ENCODE measurements at regions of chr2 and their contacts with region 1.

Region 1: DNA sequence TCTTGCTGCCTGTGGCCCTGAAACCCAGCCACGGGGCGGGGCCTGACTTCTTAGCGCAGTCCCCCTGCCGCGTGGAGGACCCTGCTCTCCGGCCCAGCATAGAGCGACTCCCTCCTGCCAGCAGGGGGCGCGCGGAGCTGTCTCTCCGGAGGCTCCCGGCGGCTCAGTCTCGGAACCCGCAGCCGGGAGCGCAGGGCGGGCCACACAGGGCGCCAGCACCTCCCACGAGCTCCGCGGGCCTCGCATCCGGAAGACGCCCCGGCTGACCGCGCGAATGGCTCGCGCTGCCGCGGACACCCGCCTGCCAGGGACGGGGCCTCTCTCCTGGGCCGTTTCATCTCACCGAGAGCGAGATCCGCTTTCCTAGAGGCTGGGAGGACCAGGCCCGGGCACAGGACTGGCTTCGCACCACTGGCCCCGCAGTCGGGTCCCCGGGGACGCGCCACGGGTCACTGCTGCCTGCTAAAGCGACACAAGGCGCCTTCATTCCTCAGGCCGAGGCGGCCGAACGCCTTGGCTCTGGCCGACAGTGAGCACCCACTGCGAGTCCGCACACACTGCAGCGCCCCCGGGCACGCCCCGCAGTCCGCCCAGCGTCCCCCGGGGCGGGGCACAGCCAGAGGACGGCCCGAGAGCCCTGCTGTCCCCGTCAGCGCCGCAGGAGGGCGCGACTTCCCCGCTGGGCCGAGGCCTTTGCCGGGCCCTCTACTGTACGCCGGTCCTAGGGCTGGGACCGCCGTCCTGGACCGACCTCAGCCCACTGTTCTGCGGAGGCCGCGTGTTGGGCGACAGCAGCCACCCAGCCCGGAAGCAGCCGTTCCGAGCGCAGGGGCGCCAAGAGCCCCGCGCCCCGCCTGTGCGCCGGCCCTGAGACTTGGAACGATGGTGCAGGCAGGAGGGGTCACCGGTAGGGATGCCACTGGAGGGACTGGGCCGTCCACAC is 39.0 kb upstream of the ARHGEF4 start:
- DNase-seq: peak; percentile 92
- H3K4me3 Mint-ChIP-seq: peak overlapping the region; percentile 63
- H3K27ac Mint-ChIP-seq: no peak overlapping the region
- H3K4me1 Mint-ChIP-seq: peaks cover 5% of the 10 kb centered on the region
- H3K27me3 Mint-ChIP-seq: no peaks in the 10 kb centered on the region

Region 2: GRCh38 chr2:130824492-130825061 is 26.8 kb after region 1 on chr2:
- CTCF ChIA-PET with region 1: interaction called, 14 read pairs
- intact Hi-C with region 1: loop called (anchors 1 kb)
- DNase-seq: peak; percentile 84
- H3K4me3 Mint-ChIP-seq: no peak overlapping the region
- H3K27ac Mint-ChIP-seq: peak overlapping the region; percentile 86
- H3K4me1 Mint-ChIP-seq: peaks cover 19% of the 10 kb centered on the region
- H3K27me3 Mint-ChIP-seq: peaks cover 4% of the 10 kb centered on the region

Region 3: GRCh38 chr2:130873700-130874346 is 76.1 kb after region 1 on chr2:
- CTCF ChIA-PET with region 1: interaction called, 174 read pairs
- intact Hi-C with region 1: loop called (anchors 1 kb)
- DNase-seq: peak; percentile 86
- H3K4me3 Mint-ChIP-seq: no peak overlapping the region
- H3K27ac Mint-ChIP-seq: no peak overlapping the region
- H3K4me1 Mint-ChIP-seq: no peaks in the 10 kb centered on the region
- H3K27me3 Mint-ChIP-seq: peaks cover 5% of the 10 kb centered on the region

Region 4: DNA sequence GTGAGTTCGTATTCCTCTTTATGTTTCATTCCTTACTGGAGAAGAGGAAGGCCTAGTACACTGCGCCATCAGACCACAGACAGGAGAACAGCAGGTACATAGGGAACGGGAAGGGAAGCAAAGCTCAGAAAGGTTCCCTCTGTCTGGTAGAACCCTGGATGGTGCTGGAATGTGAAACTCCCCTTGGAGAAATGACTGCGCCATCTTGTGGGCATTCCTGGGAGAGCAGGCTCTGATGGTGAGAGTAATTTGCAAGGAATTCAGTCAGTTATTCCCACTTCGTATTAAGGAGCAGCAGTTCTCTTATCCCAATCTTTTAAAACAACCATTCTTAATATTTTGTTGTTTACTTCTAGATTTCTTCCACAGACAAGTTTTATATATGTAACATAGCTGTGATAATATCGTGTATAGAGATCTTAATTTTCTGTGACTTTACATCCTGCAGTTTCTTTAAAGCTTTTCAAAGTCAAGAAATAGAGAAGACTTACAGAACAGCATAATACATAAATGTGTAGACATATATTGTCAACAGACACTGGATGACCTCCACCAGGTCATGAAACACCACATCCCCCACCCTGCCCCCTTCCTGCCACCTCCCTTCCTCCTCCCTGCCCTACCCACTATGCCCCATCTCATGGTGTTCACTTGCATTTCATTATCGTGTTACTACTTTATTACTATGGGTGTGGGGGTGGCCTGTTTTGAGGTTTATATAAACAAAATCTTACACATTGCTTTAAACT is 122.8 kb after region 1 on chr2:
- CTCF ChIA-PET with region 1: interaction called, 33 read pairs
- intact Hi-C with region 1: loop called (anchors 1 kb)
- DNase-seq: peak; percentile 76
- H3K4me3 Mint-ChIP-seq: no peak overlapping the region
- H3K27ac Mint-ChIP-seq: no peak overlapping the region
- H3K4me1 Mint-ChIP-seq: no peaks in the 10 kb centered on the region
- H3K27me3 Mint-ChIP-seq: peaks cover 12% of the 10 kb centered on the region

Region 5: GRCh38 chr2:130987519-130988426 is 190.0 kb after region 1 on chr2:
- CTCF ChIA-PET with region 1: no interaction called
- intact Hi-C with region 1: no loop called
- DNase-seq: no peak
- H3K4me3 Mint-ChIP-seq: no peak overlapping the region
- H3K27ac Mint-ChIP-seq: no peak overlapping the region
- H3K4me1 Mint-ChIP-seq: no peaks in the 10 kb centered on the region
- H3K27me3 Mint-ChIP-seq: no peaks in the 10 kb centered on the region

Region 6: GRCh38 chr2:131040661-131041401 is 243.1 kb after region 1 on chr2:
- CTCF ChIA-PET with region 1: no interaction called
- intact Hi-C with region 1: loop called (anchors 1 kb)
- DNase-seq: peak; percentile 51
- H3K4me3 Mint-ChIP-seq: peak overlapping the region; percentile 54
- H3K27ac Mint-ChIP-seq: no peak overlapping the region
- H3K4me1 Mint-ChIP-seq: peaks cover 29% of the 10 kb centered on the region
- H3K27me3 Mint-ChIP-seq: peaks cover 4% of the 10 kb centered on the region

Region 7: GRCh38 chr2:131105156-131105949 is 307.6 kb after region 1 on chr2 and contains the start of gene PLEKHB2:
- CTCF ChIA-PET with region 1: interaction called, 3 read pairs
- intact Hi-C with region 1: loop called (anchors 5 kb)
- DNase-seq: peak; percentile 92
- H3K4me3 Mint-ChIP-seq: peak within 1 kb of the TSS; percentile 93
- H3K27ac Mint-ChIP-seq: peak within 1 kb of the TSS; percentile 98
- H3K4me1 Mint-ChIP-seq: peaks cover 40% of the 10 kb centered on the region
- H3K27me3 Mint-ChIP-seq: no peaks in the 10 kb centered on the region
- total RNA-seq, gene PLEKHB2: 43.4 to 43.9 TPM

Measured in activated naive CD4-positive, alpha-beta T cell treated with anti-CD3 and anti-CD28 coated beads for 36 hours (primary cell).